Breast epithelium (tissue), 4 donors: ENCODE measurements at regions of chr6 and their contacts with region 1.

Region 1: GRCh38 chr6:159887761-159888160 is 3.0 kb upstream of the MAS1 start:
- DNase-seq: no peak
- H3K4me3 ChIP-seq: no peak overlapping the region
- H3K27ac ChIP-seq: no peak overlapping the region
- H3K4me1 ChIP-seq: no peaks in the 10 kb centered on the region
- H3K27me3 ChIP-seq: peaks cover 0 to 20% of the 10 kb centered on the region in 2 donors
- CTCF ChIP-seq: no peak
- POLR2A ChIP-seq: no peak

Region 2: DNA sequence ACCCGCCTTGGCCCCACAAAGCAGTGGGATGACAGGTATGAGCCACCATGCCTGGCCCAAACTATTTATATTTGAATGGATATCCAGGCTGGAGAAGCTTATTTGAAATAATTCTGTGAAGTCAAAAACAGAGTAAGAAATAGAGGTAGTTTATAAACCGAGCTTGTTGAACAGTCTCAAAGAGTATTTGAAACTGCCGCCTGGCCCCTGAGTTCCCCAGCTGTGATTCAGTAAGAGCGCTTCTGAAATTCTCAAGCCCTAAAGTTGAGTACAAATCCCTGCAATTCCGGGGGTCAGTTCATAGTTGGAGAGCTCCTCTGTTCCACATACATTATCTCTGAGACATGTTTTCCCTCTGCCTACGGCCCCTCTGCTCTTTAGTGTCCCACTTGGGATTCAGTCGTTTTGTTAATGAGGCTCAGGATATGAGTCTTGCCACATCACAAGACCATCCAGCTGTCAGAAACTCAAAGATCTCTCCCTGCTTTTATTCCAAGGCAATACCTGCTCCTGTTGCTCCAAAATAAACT is 322.5 kb before region 1 on chr6:
- intact Hi-C with region 1: no loop called
- DNase-seq: no peak
- H3K4me3 ChIP-seq: no peak overlapping the region
- H3K27ac ChIP-seq: no peak overlapping the region
- H3K4me1 ChIP-seq: no peaks in the 10 kb centered on the region
- H3K27me3 ChIP-seq: no peaks in the 10 kb centered on the region
- CTCF ChIP-seq: no peak
- POLR2A ChIP-seq: no peak

Region 3: DNA sequence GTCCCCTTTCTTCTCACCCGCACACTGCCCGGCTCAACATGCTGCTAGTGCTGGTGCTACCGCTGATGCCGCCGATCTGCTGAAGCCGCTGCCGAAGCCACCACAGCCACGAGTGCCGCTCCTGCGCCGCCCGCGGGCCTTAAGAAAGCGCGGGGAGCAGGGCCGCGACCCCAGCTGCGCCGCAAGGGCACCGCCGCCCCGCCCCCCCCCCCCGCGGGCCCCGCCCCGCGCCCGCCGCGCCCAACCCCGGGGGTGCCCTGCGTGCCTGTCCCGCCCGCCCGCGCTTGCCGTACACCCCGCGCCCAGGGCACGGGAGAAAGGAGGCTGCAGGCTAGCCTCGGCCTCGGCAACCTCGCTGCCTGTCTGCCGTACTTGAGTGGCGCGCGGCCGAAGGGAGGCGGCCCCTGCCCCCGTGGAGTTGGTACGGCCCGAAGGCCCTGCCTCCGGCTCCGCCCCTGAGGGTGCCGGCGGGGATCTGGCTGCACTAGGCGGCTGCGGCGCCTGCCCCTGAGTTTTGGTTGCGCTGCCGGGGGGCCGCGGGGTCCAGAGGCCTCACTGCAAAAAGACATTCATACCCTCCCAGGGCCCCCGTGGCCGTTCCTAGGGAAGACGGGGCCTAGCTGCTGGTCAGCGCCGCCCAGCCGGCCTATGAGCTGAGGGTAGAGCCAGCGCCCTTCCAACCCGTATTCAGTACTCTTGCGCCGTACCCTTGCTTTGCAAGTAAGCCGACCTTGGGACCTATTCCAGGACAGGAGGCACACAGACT is 194.4 kb before region 1 on chr6 and contains the start of gene SOD2:
- intact Hi-C with region 1: no loop called
- DNase-seq: peak; percentile 69 to 74
- H3K4me3 ChIP-seq: peak within 1 kb of the TSS; percentile 94 to 95 (median 95)
- H3K27ac ChIP-seq: peak within 1 kb of the TSS; percentile 93 to 97
- H3K4me1 ChIP-seq: peaks cover 0 to 11% of the 10 kb centered on the region in 2 donors
- H3K27me3 ChIP-seq: no peaks in the 10 kb centered on the region
- CTCF ChIP-seq: no peak
- POLR2A ChIP-seq: peak; percentile 55
- total RNA-seq, gene SOD2: 999 to 1,273 (median 1,163) TPM

Region 4: DNA sequence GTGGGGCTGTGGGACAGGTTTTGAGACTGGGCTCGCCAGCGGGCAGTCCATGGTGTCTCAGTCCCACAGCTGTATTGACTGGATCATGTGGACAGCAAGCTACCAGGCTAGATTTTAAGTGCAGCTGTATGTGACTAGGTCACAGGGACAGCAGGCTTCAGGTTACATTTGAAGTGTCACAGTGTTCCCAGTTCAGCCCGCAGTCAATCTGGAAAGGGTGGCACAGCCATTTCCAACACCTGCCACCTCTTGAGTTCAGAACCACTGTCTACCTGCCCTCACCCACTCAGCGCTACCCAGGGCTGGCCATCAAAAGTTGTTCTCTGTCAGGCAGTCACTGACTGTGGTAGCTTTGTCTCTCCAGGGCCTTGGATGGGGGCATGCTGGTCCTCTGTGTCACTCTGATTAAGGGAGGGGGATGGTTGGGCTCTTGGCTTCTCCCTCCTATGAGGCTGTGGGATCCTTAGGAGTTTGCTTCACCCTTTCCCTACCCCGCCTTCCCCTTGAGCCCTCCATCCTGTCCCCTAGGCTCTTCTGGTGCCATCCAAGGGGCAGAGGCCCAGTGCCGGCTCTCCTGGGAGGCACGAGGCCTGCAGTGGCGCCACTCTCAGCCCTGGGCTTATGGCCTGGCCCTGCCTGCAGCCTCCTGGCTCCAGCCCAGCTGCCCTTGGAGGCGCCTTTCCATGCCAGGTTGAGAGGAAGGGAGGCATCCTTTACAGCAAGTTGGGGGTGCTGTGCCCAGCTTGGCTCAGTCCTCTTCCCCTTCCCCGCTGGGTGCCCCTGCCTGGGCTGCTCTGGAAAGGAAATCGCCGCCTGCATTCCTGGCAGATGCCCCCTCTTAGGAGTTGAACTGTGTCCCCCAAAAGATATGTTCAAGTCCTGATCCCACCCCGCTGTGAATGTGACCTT is 42.8 kb before region 1 on chr6:
- intact Hi-C with region 1: loop called (anchors 1 kb)
- DNase-seq: no peak
- H3K4me3 ChIP-seq: no peak overlapping the region
- H3K27ac ChIP-seq: no peak overlapping the region
- H3K4me1 ChIP-seq: no peaks in the 10 kb centered on the region
- H3K27me3 ChIP-seq: no peaks in the 10 kb centered on the region
- CTCF ChIP-seq: no peak
- POLR2A ChIP-seq: no peak

Region 5: DNA sequence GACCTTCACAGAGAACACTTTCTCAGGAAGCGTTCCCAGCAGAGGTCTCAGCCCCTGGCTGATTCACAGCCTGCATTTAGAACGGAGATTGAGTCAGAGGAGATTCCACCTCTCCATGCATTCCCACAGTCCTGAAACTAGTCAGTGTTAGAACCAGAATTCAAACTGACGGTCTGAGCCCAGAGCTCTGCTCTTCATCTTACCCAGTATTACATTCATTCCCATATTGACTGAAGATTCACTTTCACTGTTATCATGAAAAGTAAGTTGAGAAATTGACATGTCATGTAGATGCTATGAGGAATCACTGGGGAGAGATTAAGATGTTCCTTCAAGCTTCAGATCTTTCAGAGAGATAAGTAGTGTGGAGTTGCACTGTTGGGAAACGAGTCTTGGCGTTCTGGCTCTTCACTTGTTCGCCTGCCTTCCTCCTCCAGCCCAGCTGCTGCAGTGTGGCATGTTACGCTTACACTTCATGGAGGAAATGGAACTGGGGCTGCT is 31.3 kb after region 1 on chr6:
- intact Hi-C with region 1: loop called (anchors 1 kb)
- DNase-seq: no peak
- H3K4me3 ChIP-seq: no peak overlapping the region
- H3K27ac ChIP-seq: no peak overlapping the region
- H3K4me1 ChIP-seq: no peaks in the 10 kb centered on the region
- H3K27me3 ChIP-seq: no peaks in the 10 kb centered on the region
- CTCF ChIP-seq: no peak
- POLR2A ChIP-seq: no peak